ENCODE measurements at regions of chr9 and their contacts with region 1.

Region 1: GRCh38 chr9:84697509-84698114 is 28.1 kb downstream of the NTRK2 start:
- DNase-seq: peak; percentile 30 to 47
- ATAC-seq: peak; percentile 85 to 96
- H3K4me3 ChIP-seq: no peak overlapping the region
- H3K27ac ChIP-seq: no peak overlapping the region
- H3K4me1 ChIP-seq: no peaks in the 10 kb centered on the region
- CTCF ChIP-seq: peak; percentile 54
- EP300 ChIP-seq: no peak
- POLR2A ChIP-seq: no peak
- RAD21 ChIP-seq: peak; percentile 64 to 75

Region 2: DNA sequence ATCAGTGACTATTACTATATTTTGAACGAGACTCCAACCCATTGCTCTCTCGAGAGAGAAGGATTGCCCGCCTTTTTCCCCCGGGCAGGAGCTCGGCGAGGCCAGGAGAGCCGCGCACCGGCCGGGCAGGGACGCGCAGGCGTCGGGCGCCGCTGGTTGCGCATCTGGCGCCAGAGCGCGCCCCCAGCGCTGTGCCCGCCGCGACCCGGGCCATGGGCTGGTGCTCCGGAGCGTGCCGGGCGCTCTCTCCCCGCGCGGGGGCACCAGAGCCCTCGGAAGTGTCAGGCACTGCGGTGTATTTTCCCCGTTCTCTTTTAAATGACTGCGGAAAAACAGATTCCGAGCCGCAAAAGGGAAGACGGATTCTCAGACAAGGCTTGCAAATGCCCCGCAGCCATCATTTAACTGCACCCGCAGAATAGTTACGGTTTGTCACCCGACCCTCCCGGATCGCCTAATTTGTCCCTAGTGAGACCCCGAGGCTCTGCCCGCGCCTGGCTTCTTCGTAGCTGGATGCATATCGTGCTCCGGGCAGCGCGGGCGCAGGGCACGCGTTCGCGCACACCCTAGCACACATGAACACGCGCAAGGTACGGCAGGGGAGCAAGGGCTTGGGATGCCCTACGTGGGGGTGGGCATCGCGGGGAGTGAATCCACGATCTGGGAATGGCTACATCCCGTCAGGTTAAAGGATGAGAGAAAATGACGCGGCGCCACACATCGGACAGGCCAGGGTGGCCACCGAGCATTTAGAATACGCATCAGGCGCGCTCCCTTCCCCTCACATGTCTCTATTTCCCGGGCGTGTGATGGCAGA is 29.2 kb before region 1 on chr9:
- CTCF ChIA-PET with region 1: interaction called, 15 read pairs
- POLR2A ChIA-PET with region 1: no interaction called
- DNase-seq: peak; percentile 67 to 72
- ATAC-seq: peak; percentile 93 to 97
- H3K4me3 ChIP-seq: peak overlapping the region; percentile 45
- H3K27ac ChIP-seq: no peak overlapping the region
- H3K4me1 ChIP-seq: peaks cover 22% of the 10 kb centered on the region; the same call in 2 of the 3 replicates
- CTCF ChIP-seq: peak; percentile 65
- EP300 ChIP-seq: no peak
- POLR2A ChIP-seq: no peak
- RAD21 ChIP-seq: peak; percentile 51 to 74; a peak in 4 of 5 replicates

Region 3: DNA sequence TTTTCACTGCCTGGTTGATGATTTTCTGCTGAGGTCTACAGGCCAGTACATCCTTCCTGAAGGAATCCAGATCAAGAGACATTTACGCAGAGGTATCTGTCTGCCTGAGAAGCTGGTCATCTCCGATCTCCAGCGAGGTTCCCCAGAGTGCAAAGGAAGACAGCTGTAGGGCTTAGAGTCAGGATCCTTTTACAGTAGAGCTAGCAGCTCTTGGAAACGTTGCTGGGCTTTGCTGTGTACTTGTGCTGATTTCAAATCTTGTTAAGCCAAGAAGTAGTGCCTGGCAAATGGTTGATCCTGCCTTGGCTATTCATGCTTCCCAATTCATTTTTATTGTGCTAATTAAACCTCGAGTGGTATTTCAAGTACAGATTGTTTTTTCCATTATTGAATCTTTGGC is 20.9 kb after region 1 on chr9:
- CTCF ChIA-PET with region 1: interaction called, 11 read pairs
- POLR2A ChIA-PET with region 1: no interaction called
- DNase-seq: no peak
- ATAC-seq: no peak
- H3K4me3 ChIP-seq: no peak overlapping the region
- H3K27ac ChIP-seq: no peak overlapping the region
- H3K4me1 ChIP-seq: no peaks in the 10 kb centered on the region
- CTCF ChIP-seq: no peak
- EP300 ChIP-seq: no peak
- POLR2A ChIP-seq: no peak
- RAD21 ChIP-seq: no peak

Region 4: GRCh38 chr9:84947363-84947972 is 249.9 kb after region 1 on chr9:
- CTCF ChIA-PET with region 1: interaction called, 20 read pairs
- POLR2A ChIA-PET with region 1: no interaction called
- DNase-seq: peak; percentile 20 to 63
- ATAC-seq: peak; percentile 39 to 67; a peak in 3 of 6 replicates
- H3K4me3 ChIP-seq: no peak overlapping the region
- H3K27ac ChIP-seq: no peak overlapping the region
- H3K4me1 ChIP-seq: peaks cover 10% of the 10 kb centered on the region; the same call in 2 of the 3 replicates
- CTCF ChIP-seq: no peak
- EP300 ChIP-seq: no peak
- POLR2A ChIP-seq: no peak
- RAD21 ChIP-seq: no peak

Region 5: DNA sequence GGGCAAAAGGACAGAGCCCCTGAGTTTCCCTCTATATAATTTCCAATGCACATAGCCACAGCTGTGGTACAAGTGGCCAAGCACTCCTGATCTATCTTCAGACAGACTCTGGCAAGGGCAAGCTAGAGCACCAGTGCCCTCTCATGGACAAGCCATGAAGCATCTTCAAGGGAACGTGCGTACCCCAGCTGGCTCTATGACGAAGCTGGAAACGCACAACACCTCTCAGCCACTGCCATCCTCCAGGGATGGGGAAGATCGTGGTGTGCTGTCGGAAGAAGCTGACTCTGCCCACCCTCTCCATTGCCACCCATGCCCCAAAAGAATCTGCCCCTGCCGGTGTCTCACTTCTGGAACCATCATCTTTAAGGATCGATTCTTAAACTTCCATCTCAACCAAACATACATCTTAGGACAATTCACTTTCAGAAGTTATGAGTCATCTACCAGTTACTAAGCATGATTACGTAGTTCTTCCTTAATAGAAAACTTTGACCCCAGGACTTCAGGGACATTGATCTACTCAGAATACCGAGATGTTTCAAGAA is 561.3 kb after region 1 on chr9:
- CTCF ChIA-PET with region 1: interaction called, 18 read pairs
- POLR2A ChIA-PET with region 1: no interaction called
- DNase-seq: peak; percentile 60 to 74
- ATAC-seq: peak; percentile 95 to 98
- H3K4me3 ChIP-seq: no peak overlapping the region
- H3K27ac ChIP-seq: no peak overlapping the region
- H3K4me1 ChIP-seq: no peaks in the 10 kb centered on the region
- CTCF ChIP-seq: peak; percentile 44
- EP300 ChIP-seq: no peak
- POLR2A ChIP-seq: no peak
- RAD21 ChIP-seq: peak; percentile 71 to 88